ENCODE measurements at regions of chr9 and their contacts with region 1.

Region 1: DNA sequence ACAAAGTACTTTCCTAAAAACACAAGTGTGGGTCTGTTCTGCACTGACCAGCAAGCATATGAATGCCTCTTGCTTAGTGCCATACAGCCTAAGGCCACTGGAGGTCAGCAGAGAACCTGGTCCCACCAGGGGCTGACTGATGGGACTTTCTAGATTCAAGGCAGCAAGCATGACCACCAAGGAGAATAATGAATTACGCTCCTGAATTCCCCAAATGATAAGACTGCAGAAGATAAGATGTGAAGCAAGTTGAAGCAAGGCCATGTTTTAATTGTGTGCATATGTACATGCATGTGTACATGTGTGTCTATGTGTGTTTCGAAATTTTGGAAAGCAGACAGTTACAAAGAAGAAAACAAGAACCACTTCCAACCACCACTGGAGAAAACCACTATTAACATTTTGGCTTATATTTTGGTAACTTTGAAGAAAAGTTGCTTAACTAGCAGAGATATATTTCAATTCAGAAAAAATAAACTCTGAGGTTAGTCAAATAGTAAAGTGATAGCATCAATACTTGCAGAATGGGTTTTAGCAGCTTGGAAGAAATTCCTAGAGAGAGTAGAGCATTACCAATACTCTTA is 70.5 kb downstream of the ERP44 start:
- DNase-seq: peak in 7 of 10 donors; percentile 59 to 94 (median 74)

Region 2: GRCh38 chr9:99919930-99920329 is 108.4 kb before region 1 on chr9:
- intact Hi-C with region 1: no loop called
- DNase-seq: no peak

Region 3: GRCh38 chr9:100216178-100216787 is 188.0 kb after region 1 on chr9:
- intact Hi-C with region 1: loop called (anchors 1 kb)
- DNase-seq: peak in 5 of 10 donors; percentile 8 to 70 (median 57)

Measured in posterior cingulate gyrus (tissue), 11 donors.